IMR-90 (cell line): ENCODE measurements at regions of chr6 and their contacts with region 1.

Region 1: DNA sequence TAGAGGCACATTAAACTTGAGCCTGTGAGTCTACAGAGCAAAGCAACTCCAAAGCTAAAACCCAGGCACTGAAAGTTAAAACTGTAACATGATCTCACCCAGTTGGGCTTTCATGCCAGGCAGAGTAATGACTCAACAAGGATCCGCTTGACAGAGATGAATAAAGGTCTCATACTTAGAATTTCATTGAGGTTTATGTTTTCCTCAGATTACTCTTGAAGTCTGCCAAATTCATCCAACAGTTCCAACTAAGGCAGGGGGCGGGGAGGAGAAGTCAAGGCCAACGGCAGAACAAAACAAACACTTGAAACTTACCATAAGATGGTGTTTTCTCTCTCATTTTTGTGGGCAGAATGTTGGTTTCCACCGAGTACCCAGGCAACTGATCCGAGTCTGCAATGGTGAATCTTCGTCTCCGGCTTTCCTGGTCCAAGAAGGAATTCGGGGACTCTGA is 54.0 kb upstream of the IPCEF1 start:
- DNase-seq: peak; percentile 97
- ATAC-seq: peak; percentile 84
- H3K4me3 ChIP-seq: peak overlapping the region; percentile 9; the same call in 1 of the 2 replicates
- H3K27ac ChIP-seq: peak overlapping the region; percentile 77
- H3K4me1 ChIP-seq: peaks cover 16% of the 10 kb centered on the region
- H3K27me3 ChIP-seq: no peaks in the 10 kb centered on the region
- CTCF ChIP-seq: no peak
- POLR2A ChIP-seq: no peak
- RAD21 ChIP-seq: peak; percentile 10; the same call in 1 of the 2 replicates

Region 2: GRCh38 chr6:154292890-154293398 is 117.7 kb before region 1 on chr6:
- CTCF ChIA-PET with region 1: no interaction called
- POLR2A ChIA-PET with region 1: no interaction called
- dilution Hi-C with region 1: no loop called
- in situ Hi-C with region 1: no loop called
- intact Hi-C with region 1: loop called (anchors 5 kb)
- DNase-seq: peak; percentile 92
- ATAC-seq: peak; percentile 84
- H3K4me3 ChIP-seq: no peak overlapping the region; the same call in 1 of the 2 replicates
- H3K27ac ChIP-seq: peak overlapping the region; percentile 83
- H3K4me1 ChIP-seq: peaks cover 12% of the 10 kb centered on the region
- H3K27me3 ChIP-seq: no peaks in the 10 kb centered on the region
- CTCF ChIP-seq: no peak
- POLR2A ChIP-seq: no peak
- RAD21 ChIP-seq: no peak

Region 3: DNA sequence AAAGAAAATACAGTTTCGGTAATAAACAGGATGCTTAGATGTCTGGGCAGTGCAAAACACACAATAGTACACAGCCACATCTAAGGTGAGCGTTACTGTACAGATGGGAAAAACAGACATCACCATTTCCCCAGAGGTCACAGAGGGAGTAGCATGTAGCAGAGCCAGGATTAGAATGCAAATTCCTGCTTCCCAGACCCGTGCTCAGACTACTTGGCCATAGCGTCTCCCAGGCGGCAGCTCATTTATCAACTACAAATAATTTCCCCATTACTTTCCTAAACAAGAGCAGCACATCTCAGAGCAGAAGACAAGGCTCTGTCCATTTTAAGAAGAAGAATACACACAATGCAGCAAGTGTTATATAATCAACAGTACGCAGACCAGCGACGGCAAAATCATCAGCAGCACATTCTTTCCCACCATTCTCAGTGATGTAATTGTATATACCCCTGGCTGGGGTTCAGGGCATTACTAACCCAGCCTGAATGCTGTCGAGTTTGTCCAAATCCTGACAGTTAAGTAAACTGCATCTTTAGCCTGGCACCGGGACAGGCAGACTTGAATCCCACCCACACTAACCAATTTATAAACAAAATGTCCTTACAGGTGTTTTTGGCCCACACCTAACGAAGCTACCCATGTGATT is 37.9 kb after region 1 on chr6:
- CTCF ChIA-PET with region 1: no interaction called
- POLR2A ChIA-PET with region 1: no interaction called
- dilution Hi-C with region 1: no loop called
- in situ Hi-C with region 1: no loop called
- intact Hi-C with region 1: loop called (anchors 2 kb)
- DNase-seq: peak; percentile 93
- ATAC-seq: peak; percentile 91
- H3K4me3 ChIP-seq: no peak overlapping the region
- H3K27ac ChIP-seq: no peak overlapping the region
- H3K4me1 ChIP-seq: peaks cover 8% of the 10 kb centered on the region
- H3K27me3 ChIP-seq: no peaks in the 10 kb centered on the region
- CTCF ChIP-seq: 0 out of 2 replicates have a peak, but pooled peaks have one; percentile 12
- POLR2A ChIP-seq: no peak
- RAD21 ChIP-seq: peak; percentile 33; the same call in 1 of the 2 replicates

Region 4: GRCh38 chr6:154474636-154475428 is 64.2 kb after region 1 on chr6:
- CTCF ChIA-PET with region 1: no interaction called
- POLR2A ChIA-PET with region 1: no interaction called
- dilution Hi-C with region 1: no loop called
- in situ Hi-C with region 1: no loop called
- intact Hi-C with region 1: loop called (anchors 2 kb)
- DNase-seq: peak; percentile 84
- ATAC-seq: peak; percentile 53
- H3K4me3 ChIP-seq: no peak overlapping the region
- H3K27ac ChIP-seq: no peak overlapping the region
- H3K4me1 ChIP-seq: peaks cover 16% of the 10 kb centered on the region
- H3K27me3 ChIP-seq: no peaks in the 10 kb centered on the region
- CTCF ChIP-seq: no peak
- POLR2A ChIP-seq: no peak
- RAD21 ChIP-seq: no peak

Region 5: GRCh38 chr6:154510143-154510905 is 99.7 kb after region 1 on chr6 and contains the start of gene CNKSR3:
- CTCF ChIA-PET with region 1: no interaction called
- POLR2A ChIA-PET with region 1: no interaction called
- dilution Hi-C with region 1: no loop called
- in situ Hi-C with region 1: no loop called
- intact Hi-C with region 1: loop called (anchors 2 kb)
- DNase-seq: peak; percentile 95
- ATAC-seq: peak; percentile 89
- H3K4me3 ChIP-seq: peak within 1 kb of the TSS; percentile 88
- H3K27ac ChIP-seq: peak within 1 kb of the TSS; percentile 89
- H3K4me1 ChIP-seq: peaks cover 5% of the 10 kb centered on the region
- H3K27me3 ChIP-seq: no peaks in the 10 kb centered on the region
- CTCF ChIP-seq: peak; percentile 13; the same call in 1 of the 2 replicates
- POLR2A ChIP-seq: peak; percentile 58
- RAD21 ChIP-seq: 0 out of 2 replicates have a peak, but pooled peaks have one; percentile 27
- total RNA-seq, gene CNKSR3: 15.0 and 15.8 TPM in 2 replicates